ENCODE measurements at regions of chr16 and their contacts with region 1.

Region 1: DNA sequence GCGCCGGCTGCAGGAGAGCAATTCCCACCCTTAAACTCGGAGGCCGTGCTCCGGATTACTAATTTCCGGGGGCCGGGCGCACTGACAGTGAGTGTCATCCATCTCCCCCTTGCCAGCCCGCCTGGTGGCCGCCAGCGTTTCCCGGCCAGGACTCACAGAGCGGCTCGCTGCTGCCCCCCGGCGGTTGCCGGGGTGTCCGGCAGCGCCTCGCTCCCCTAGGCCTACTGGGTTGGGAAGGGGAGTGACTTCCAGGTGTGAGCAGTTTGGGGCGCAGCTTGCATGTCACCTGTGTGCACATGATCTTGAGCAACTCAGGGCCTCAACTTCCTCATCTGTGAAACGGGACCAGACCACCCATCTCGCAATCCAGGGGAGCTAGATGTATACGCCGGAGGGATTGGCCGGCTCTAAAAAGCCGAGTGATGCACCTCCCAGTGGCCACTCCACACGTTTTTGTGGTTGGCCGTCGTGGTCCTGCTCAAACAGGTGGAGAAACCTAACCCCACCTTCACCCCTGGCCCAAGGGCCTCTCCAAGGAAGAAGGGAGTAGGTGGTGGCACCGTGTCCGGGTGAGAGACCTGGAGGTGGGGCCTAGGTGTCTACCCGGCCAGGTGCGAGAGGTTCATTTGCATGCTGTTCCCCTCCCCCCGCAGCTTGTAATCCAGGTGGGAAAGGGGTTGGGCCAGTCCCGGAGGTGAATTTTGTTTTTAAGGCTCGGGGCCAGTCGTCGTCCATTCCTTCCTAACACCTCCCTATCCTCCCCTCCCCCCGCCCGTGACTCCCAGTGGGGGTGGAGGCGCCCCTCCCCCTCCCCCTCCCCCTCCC is 2.4 kb upstream of the GSE1 start:
- DNase-seq: peak; percentile 79 to 89 (median 88)
- H3K4me3 ChIP-seq: peak overlapping the region; percentile 33
- H3K27ac ChIP-seq: no peak overlapping the region
- H3K4me1 ChIP-seq: peaks cover 30% of the 10 kb centered on the region
- H3K27me3 ChIP-seq: no peaks in the 10 kb centered on the region
- CTCF ChIP-seq: peak; percentile 97 to 99 (median 98)
- EP300 ChIP-seq: no peak
- POLR2A ChIP-seq: no peak

Region 2: DNA sequence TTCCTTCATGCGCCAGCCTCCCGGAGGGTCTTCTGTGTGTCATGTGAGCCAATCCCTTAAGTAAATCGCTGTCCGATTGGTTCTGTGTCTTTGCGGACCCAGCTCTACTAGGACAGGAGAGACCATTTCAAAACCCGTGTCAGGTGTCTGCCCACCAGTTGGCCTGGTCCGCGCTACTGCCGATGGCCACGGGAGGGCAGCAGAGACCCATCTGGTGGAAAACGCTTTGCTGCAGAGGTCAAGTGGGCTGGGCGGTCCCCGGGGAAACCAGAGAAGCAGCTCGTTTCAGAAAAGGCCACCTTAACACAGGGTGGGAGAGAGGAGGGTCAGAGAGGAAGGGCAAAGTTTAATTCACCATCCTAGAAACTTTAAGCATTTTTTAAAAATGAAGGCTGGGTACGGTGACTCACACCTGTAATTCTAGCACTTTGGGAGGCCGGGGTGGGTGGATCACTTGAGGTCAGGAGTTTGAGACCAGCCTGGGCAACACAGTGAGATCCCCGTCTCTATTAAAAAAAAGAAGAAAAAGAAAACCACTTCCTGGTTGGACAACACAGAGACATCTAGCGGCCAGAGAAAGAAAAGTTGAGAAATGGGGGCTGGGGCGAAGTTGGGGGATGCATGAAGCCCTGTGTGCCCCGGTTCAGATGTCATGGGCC is 495.7 kb before region 1 on chr16:
- intact Hi-C with region 1: loop called in 1 of 4 experiments (anchors 10 kb)
- DNase-seq: peak; percentile 84 to 94 (median 91)
- H3K4me3 ChIP-seq: no peak overlapping the region
- H3K27ac ChIP-seq: no peak overlapping the region
- H3K4me1 ChIP-seq: peaks cover 1% of the 10 kb centered on the region
- H3K27me3 ChIP-seq: no peaks in the 10 kb centered on the region
- CTCF ChIP-seq: peak; percentile 91 to 98 (median 95)
- EP300 ChIP-seq: no peak
- POLR2A ChIP-seq: no peak

Region 3: DNA sequence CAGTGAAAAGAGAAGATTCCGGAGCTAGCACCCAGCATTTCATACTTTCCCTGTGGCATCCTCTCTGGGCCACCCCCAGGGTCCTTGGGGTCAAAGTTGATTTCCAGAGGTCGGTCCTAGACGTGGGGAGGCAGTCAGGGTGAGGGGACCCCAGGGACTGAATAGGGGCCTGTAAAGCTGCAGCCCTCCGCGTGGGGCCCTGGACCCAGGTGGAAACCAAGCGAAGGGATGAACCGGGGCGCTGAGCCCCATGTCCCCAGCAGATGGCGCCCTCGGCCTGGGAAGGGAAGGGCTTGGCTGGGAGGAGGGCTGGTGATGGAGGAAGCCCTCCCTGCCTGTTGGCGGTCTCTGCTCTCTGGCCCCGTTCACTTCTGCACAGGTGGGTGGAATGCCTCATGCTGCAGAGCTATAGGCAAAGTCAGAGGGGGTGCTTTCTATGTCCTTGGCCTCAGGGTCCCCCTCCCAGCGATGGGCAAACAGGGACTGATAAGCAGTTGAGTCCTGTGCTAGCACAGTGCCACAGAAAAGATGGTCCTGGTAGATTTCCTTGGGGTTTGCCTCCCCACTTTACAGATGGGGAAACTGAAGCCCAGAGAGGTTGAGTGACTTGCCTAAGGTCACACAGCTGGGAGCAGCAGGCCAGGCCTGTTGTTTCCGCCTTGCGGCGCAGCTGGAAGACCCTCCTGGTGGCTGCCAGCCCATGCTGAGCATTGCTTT is 335.0 kb before region 1 on chr16:
- intact Hi-C with region 1: loop called in 1 of 4 experiments (anchors 10 kb)
- DNase-seq: peak; percentile 52 to 84 (median 78)
- H3K4me3 ChIP-seq: no peak overlapping the region
- H3K27ac ChIP-seq: no peak overlapping the region
- H3K4me1 ChIP-seq: peaks cover 7% of the 10 kb centered on the region
- H3K27me3 ChIP-seq: no peaks in the 10 kb centered on the region
- CTCF ChIP-seq: peak; percentile 64 to 80 (median 79)
- EP300 ChIP-seq: no peak
- POLR2A ChIP-seq: no peak

Region 4: GRCh38 chr16:85393674-85394483 is 216.8 kb before region 1 on chr16:
- intact Hi-C with region 1: loop called in 2 of 4 experiments (anchors 10 kb)
- DNase-seq: peak; percentile 72 to 86 (median 82)
- H3K4me3 ChIP-seq: no peak overlapping the region
- H3K27ac ChIP-seq: no peak overlapping the region
- H3K4me1 ChIP-seq: peaks cover 17% of the 10 kb centered on the region
- H3K27me3 ChIP-seq: no peaks in the 10 kb centered on the region
- CTCF ChIP-seq: peak; percentile 88 to 89 (median 88)
- EP300 ChIP-seq: no peak
- POLR2A ChIP-seq: no peak

Region 5: GRCh38 chr16:85420501-85421337 is 190.0 kb before region 1 on chr16:
- intact Hi-C with region 1: loop called in 3 of 4 experiments (anchors 2 to 10 kb)
- DNase-seq: peak; percentile 41 to 80 (median 64)
- H3K4me3 ChIP-seq: no peak overlapping the region
- H3K27ac ChIP-seq: no peak overlapping the region
- H3K4me1 ChIP-seq: no peaks in the 10 kb centered on the region
- H3K27me3 ChIP-seq: no peaks in the 10 kb centered on the region
- CTCF ChIP-seq: peak; percentile 87 to 100 (median 97)
- EP300 ChIP-seq: no peak
- POLR2A ChIP-seq: no peak

Region 6: DNA sequence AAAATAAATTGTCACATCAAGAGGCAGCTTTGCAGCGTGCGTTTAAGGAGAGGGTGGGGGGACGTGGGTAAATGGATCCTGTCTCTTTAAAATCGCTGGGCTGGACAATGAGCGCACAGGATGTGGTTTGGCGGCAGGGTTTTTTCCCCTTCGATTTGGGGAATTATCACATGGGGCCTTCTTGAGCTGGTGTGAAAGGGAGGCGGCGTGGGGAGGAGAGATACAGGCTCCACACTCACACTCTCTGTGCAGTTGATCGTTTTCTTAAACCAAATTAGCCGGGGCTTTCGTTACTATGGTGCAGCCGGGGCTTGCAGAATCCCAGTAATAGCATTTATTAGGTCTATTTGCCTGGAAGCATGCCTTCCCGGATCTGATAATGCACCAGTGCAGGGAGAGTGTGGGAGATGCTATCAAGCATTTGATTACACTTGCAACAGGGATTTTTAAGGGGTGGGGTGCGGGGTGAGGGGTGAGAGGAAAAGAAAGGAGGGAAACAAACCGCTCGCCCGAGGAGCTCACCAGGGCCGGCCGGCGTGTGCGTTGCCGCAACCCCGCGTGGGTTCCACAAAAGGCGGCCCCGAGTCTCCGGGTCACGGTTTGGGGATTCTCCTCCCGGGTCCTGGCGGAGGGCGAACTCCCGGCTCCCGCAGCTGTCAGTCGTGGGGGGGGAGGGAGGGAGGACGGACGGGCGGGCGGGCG is 56.5 kb before region 1 on chr16:
- intact Hi-C with region 1: loop called in 2 of 4 experiments (anchors 5 to 10 kb)
- DNase-seq: peak in 4 of 5 donors; percentile 50 to 68 (median 62)
- H3K4me3 ChIP-seq: peak overlapping the region; percentile 67
- H3K27ac ChIP-seq: peak overlapping the region; percentile 26 to 38
- H3K4me1 ChIP-seq: peaks cover 8% of the 10 kb centered on the region
- H3K27me3 ChIP-seq: no peaks in the 10 kb centered on the region
- CTCF ChIP-seq: no peak
- EP300 ChIP-seq: no peak
- POLR2A ChIP-seq: peak; percentile 7